Activated CD4-positive, alpha-beta T cell treated with anti-CD3 and anti-CD28 coated beads for 36 hours (primary cell): ENCODE measurements at regions of chr13 and their contacts with region 1.

Region 1: GRCh38 chr13:38462605-38463004 is 113.0 kb downstream of the UFM1 start:
- DNase-seq: no peak
- ATAC-seq: no peak
- H3K4me3 Mint-ChIP-seq: no peak overlapping the region
- H3K27ac Mint-ChIP-seq: no peak overlapping the region
- H3K4me1 Mint-ChIP-seq: no peaks in the 10 kb centered on the region
- H3K27me3 Mint-ChIP-seq: peaks cover 11% of the 10 kb centered on the region

Region 2: DNA sequence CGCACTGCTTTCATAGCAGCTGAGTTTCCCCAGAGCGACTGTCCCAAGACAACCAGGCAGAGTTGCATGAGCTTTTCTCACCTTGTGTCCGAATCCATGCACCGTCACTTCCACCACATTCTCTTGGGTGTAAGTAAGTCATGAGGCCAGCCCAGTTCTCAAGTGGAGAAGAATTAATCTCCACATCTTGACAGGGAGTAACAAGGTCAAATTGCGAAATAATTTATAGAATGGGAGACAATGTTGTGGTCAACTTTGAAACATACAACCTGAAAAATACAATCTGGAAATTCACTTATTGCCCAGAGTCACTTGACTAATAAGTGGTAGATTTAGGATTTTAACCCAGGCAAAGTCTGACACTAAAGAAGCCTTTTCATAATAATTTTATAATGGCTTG is 10.7 kb after region 1 on chr13:
- CTCF ChIA-PET with region 1: interaction called, 3 read pairs
- POLR2A ChIA-PET with region 1: no interaction called
- intact Hi-C with region 1: loop called in 1 of 2 experiments (anchors 1 kb)
- DNase-seq: no peak
- ATAC-seq: no peak
- H3K4me3 Mint-ChIP-seq: no peak overlapping the region
- H3K27ac Mint-ChIP-seq: no peak overlapping the region
- H3K4me1 Mint-ChIP-seq: no peaks in the 10 kb centered on the region
- H3K27me3 Mint-ChIP-seq: no peaks in the 10 kb centered on the region

Region 3: DNA sequence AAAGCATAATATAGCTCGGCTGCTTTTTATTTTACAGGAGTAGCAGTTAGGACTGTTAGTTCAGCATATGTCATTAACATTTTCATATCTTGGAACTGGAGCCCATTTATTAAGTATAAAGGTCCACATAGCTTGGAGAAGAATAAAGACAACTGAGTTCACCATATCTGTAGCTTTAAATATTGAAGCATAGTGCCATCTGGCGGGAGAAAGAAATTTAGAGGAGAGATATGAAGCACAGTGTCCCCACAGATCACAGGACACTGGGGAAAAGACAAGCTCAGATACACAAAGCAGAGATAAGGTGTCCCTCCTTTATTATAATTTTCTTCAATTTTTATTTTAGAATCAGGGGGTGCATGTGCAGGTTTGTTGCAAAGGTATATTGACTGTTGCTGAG is 119.5 kb after region 1 on chr13:
- CTCF ChIA-PET with region 1: no interaction called
- POLR2A ChIA-PET with region 1: no interaction called
- intact Hi-C with region 1: no loop called
- DNase-seq: no peak
- ATAC-seq: peak; percentile 39
- H3K4me3 Mint-ChIP-seq: no peak overlapping the region
- H3K27ac Mint-ChIP-seq: no peak overlapping the region
- H3K4me1 Mint-ChIP-seq: no peaks in the 10 kb centered on the region
- H3K27me3 Mint-ChIP-seq: no peaks in the 10 kb centered on the region